MCF 10A (cell line): ENCODE measurements at regions of chr5 and their contacts with region 1.

Region 1: DNA sequence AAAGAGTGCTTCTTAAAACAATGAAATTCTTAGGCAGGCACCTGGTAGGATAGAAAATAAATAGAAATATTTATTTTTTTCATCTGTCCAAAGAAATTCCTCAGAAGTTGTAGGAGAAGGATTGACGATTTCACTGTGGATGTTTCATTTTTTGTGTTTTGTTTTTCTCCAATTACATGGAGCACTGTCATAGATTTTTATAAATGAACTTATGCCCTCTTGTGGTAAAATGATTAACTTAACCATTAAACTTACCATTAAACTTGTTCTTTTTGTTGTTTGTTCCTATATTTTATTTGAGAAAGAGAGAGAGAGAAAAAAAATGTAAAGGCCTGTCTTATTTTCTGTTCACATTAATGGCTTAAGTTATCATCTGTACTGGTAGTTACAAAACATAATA is 339.2 kb downstream of the PRR16 start:
- DNase-seq: peak; percentile 33
- H3K4me3 Mint-ChIP-seq: no peak overlapping the region
- H3K27ac Mint-ChIP-seq: no peak overlapping the region
- H3K4me1 Mint-ChIP-seq: peaks cover 15% of the 10 kb centered on the region
- H3K27me3 Mint-ChIP-seq: no peaks in the 10 kb centered on the region
- CTCF ChIP-seq: peak; percentile 41

Region 2: DNA sequence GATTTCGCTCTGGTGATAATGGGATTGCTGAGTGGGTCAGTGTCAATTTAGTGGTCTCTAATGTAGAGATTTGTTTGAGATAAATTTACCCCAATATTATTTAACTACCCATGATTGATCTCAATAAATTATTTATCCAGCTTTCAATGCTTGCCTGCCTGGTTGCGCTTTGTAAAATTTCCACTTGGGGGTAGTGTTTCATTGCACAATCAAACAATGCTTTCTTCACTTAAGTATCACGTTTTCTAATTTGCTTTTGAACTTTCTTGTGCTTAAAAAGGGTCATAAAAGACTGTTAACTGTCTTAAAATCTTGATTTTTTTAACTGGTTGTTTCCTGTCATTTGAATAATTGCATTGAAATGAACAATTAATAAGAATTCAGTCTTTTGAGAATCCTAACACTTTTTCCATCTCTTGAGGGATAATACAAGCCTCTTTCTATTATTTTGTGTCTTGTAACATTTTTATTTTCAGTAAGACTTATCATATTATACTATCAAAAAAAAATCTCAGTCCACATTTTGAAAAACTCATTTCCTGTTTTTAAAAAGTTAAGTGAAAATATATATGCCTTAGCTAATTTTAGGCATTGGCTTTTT is 1332.3 kb before region 1 on chr5:
- CTCF ChIA-PET with region 1: interaction called, 3 read pairs
- POLR2A ChIA-PET with region 1: no interaction called
- intact Hi-C with region 1: loop called (anchors 1 kb)
- DNase-seq: peak; percentile 65
- H3K4me3 Mint-ChIP-seq: no peak overlapping the region
- H3K27ac Mint-ChIP-seq: peak overlapping the region; percentile 39
- H3K4me1 Mint-ChIP-seq: no peaks in the 10 kb centered on the region
- H3K27me3 Mint-ChIP-seq: no peaks in the 10 kb centered on the region
- CTCF ChIP-seq: peak; percentile 77

Region 3: DNA sequence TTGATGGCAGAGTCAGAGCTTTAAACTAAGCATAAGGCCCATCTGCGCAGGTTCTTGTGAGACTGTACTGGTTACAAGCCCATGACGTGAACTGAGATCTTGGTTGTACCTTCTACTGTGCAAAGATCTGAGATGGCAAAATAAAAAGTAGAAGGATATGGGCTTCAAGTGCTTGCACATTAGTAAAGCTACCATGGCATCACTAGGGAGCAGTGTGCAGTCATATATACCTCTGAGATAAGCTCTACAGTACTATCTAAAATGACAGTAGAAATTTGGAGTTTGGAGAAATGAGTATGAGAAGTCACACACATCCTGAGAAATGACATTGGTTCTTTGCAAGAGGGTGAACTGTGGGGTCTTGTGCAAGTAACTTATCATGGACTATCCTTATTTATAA is 747.4 kb before region 1 on chr5:
- CTCF ChIA-PET with region 1: interaction called, 5 read pairs
- POLR2A ChIA-PET with region 1: no interaction called
- intact Hi-C with region 1: loop called (anchors 1 kb)
- DNase-seq: peak; percentile 65
- H3K4me3 Mint-ChIP-seq: no peak overlapping the region
- H3K27ac Mint-ChIP-seq: no peak overlapping the region
- H3K4me1 Mint-ChIP-seq: no peaks in the 10 kb centered on the region
- H3K27me3 Mint-ChIP-seq: no peaks in the 10 kb centered on the region
- CTCF ChIP-seq: peak; percentile 43

Region 4: DNA sequence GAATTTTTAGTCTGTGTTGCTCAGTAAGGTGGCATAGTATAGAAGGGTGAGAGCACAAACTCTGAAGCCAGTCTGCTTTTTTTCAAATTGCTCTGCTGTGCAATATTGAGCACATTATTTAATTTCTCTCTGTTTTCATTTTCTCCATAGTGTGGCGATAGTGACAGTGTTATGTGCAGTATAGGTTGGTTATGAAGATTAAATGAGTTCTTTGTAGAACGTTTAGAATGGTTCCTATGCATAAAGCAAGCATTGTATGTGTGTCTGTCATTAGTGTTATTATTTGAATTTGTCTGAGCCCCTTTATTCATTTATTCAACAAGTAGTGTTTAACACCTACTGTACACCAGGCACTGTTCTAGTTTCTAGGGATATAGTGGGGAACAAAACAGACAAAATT is 329.9 kb before region 1 on chr5:
- CTCF ChIA-PET with region 1: interaction called, 3 read pairs
- POLR2A ChIA-PET with region 1: interaction called, 3 read pairs
- intact Hi-C with region 1: loop called (anchors 1 kb)
- DNase-seq: no peak
- H3K4me3 Mint-ChIP-seq: no peak overlapping the region
- H3K27ac Mint-ChIP-seq: no peak overlapping the region
- H3K4me1 Mint-ChIP-seq: peaks cover 13% of the 10 kb centered on the region
- H3K27me3 Mint-ChIP-seq: no peaks in the 10 kb centered on the region
- CTCF ChIP-seq: no peak

Region 5: GRCh38 chr5:120684749-120685415 is 118.4 kb before region 1 on chr5:
- CTCF ChIA-PET with region 1: interaction called, 3 read pairs
- POLR2A ChIA-PET with region 1: no interaction called
- intact Hi-C with region 1: loop called (anchors 5 kb)
- DNase-seq: peak; percentile 18
- H3K4me3 Mint-ChIP-seq: no peak overlapping the region
- H3K27ac Mint-ChIP-seq: no peak overlapping the region
- H3K4me1 Mint-ChIP-seq: peaks cover 10% of the 10 kb centered on the region
- H3K27me3 Mint-ChIP-seq: no peaks in the 10 kb centered on the region
- CTCF ChIP-seq: no peak

Region 6: GRCh38 chr5:121019106-121019505 is 215.8 kb after region 1 on chr5:
- CTCF ChIA-PET with region 1: no interaction called
- POLR2A ChIA-PET with region 1: no interaction called
- intact Hi-C with region 1: no loop called
- DNase-seq: peak; percentile 19
- H3K4me3 Mint-ChIP-seq: no peak overlapping the region
- H3K27ac Mint-ChIP-seq: no peak overlapping the region
- H3K4me1 Mint-ChIP-seq: no peaks in the 10 kb centered on the region
- H3K27me3 Mint-ChIP-seq: no peaks in the 10 kb centered on the region
- CTCF ChIP-seq: no peak

Region 7: GRCh38 chr5:121949867-121950266 is 1146.6 kb after region 1 on chr5:
- CTCF ChIA-PET with region 1: interaction called, 9 read pairs
- POLR2A ChIA-PET with region 1: no interaction called
- intact Hi-C with region 1: loop called (anchors 5 kb)
- DNase-seq: peak; percentile 82
- H3K4me3 Mint-ChIP-seq: no peak overlapping the region
- H3K27ac Mint-ChIP-seq: no peak overlapping the region
- H3K4me1 Mint-ChIP-seq: no peaks in the 10 kb centered on the region
- H3K27me3 Mint-ChIP-seq: no peaks in the 10 kb centered on the region
- CTCF ChIP-seq: peak; percentile 85